Posterior vena cava (tissue), 2 donors: ENCODE measurements at regions of chr12 and their contacts with region 1.

Region 1: DNA sequence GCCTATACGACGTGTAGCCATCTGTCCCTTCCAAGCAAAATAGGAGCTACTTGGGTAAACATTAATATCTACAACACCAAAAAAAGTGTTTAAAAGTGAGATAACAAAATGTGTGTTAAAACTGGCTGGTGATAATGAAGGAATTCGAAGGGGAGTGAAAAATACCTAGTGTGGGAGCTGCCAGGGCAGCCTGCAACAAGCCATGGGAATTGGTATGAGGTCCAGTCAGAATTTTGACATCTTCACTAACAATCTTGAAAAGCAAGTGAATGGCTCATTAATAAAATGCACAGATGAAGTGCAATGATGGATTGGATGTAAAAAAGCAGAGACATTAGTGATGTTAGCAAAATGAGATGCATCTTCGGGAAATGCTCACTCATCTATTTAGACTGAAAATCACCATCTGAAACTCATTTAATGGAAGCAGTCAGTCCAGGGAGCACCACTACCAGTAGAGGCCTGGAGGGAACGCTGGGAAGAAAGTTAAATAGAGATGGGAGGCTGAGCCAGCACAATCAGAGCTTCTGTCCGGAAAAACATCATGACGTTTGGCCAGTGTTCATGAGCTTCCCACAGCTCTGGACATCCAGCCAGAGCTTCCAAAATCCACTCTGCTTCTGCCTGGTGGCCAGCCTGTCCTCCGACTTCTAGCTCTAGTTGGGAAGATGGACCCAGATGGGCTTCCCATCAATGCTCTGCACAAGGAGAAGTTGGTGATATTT is 405.0 kb upstream of the TMTC1 start:
- DNase-seq: no peak

Region 2: DNA sequence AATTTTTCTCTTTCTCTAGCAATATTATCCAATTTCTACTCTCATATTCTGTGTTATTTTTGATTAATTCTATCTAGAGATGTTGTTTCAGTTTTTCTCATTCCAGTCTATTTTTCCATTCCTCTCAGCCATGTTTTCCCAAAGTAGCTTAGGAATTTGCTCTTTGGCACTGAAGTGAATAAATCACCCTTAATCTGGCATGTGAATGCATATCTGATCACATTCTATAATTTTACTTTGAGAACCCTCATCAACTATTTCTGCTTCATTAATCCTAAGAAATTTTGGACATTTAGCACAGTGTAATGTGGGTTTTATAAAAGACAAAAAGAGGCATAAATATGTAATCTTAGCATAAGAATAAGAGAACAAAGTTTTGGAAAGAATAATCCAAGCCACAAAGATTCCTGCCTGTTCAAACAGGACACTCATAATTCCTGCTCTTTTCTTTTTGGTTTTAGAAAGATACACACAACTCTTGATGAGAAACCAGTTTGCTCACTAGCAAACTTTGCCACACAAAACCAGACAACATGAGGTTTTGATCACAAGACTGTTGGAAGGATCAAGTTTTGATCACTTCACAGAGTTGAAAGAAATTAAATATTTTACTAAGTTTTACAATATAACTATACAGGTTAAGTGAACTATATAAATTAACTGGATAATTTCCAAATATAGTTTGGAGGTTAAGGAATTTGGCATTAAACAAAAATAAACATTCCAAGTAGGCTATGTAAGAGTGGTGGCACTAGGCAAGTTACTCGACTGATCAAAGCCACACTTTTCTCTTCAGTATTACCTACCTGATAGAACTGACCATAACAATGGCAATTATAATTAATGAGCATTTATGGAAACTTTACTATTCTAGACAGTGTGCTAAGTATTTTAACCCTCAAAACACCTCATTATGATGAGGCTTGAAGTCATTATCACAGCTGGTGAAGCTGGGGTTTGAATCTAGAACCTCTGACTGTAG is 178.4 kb before region 1 on chr12:
- intact Hi-C with region 1: no loop called
- DNase-seq: no peak

Region 3: GRCh38 chr12:30106204-30106965 is 82.4 kb before region 1 on chr12:
- intact Hi-C with region 1: loop called in 1 of 2 experiments (anchors 2 kb)
- DNase-seq: no peak